Naive thymus-derived CD8-positive, alpha-beta T cell (primary cell): ENCODE measurements at regions of chr16 and their contacts with region 1.

Region 1: GRCh38 chr16:30941600-30942425 is 7.1 kb upstream of the ORAI3 start:
- DNase-seq: peak in 9 of 10 donors; percentile 36 to 67 (median 52)
- ATAC-seq: peak; percentile 93 to 98
- H3K4me3 Mint-ChIP-seq: peak overlapping the region in 2 of 10 donors; percentile 12 to 55
- H3K27ac Mint-ChIP-seq: peak overlapping the region in 4 of 10 donors; percentile 34 to 62 (median 48)
- H3K4me1 Mint-ChIP-seq: peaks cover 14 to 21% (median 19%) of the 10 kb centered on the region in 4 donors
- H3K27me3 Mint-ChIP-seq: no peaks in the 10 kb centered on the region

Region 2: GRCh38 chr16:30698139-30698815 is 243.5 kb before region 1 on chr16:
- POLR2A ChIA-PET with region 1: no interaction called
- DNase-seq: peak; percentile 98 to 100 (median 100)
- ATAC-seq: peak; percentile 75 to 77
- H3K4me3 Mint-ChIP-seq: peak overlapping the region; percentile 93 to 98 (median 96)
- H3K27ac Mint-ChIP-seq: peak overlapping the region; percentile 99 to 100 (median 100)
- H3K4me1 Mint-ChIP-seq: peaks cover 14 to 43% (median 40%) of the 10 kb centered on the region in 4 donors
- H3K27me3 Mint-ChIP-seq: no peaks in the 10 kb centered on the region

Region 3: DNA sequence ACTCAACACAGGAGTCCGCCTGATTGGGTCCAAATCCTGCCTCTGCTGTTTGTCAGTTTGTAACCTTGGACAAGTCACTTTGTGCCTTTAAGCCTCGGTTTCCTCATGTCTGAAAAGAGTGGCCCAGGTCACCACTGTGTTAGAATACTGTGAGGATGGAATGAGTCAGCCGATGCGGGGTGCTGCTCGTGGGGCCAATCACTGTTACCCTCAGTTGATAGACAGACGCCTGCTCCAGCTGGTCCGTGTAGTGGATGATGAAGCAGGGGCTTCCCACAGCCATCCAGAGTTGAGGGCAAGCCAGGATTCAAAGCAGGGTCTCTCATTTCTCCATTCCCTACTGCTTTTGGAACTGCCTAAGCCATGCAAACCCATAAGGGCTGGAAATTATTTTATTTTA is 12.6 kb before region 1 on chr16:
- POLR2A ChIA-PET with region 1: interaction called, 10 read pairs
- DNase-seq: no peak
- ATAC-seq: no peak
- H3K4me3 Mint-ChIP-seq: no peak overlapping the region
- H3K27ac Mint-ChIP-seq: peak overlapping the region in 1 of 10 donors; percentile 79
- H3K4me1 Mint-ChIP-seq: peaks cover 14 to 30% (median 20%) of the 10 kb centered on the region in 4 donors
- H3K27me3 Mint-ChIP-seq: no peaks in the 10 kb centered on the region

Region 4: GRCh38 chr16:30957456-30958174 is 15.8 kb after region 1 on chr16 and contains the start of gene SETD1A:
- POLR2A ChIA-PET with region 1: interaction called, 10 read pairs
- DNase-seq: peak; percentile 91 to 99 (median 98)
- ATAC-seq: peak; percentile 85 to 89
- H3K4me3 Mint-ChIP-seq: peak within 1 kb of the TSS; percentile 89 to 99 (median 95)
- H3K27ac Mint-ChIP-seq: peak within 1 kb of the TSS; percentile 97 to 99 (median 98)
- H3K4me1 Mint-ChIP-seq: peaks cover 21 to 40% (median 36%) of the 10 kb centered on the region in 4 donors
- H3K27me3 Mint-ChIP-seq: peaks cover 0 to 2% (median 0%) of the 10 kb centered on the region in 5 donors
- polyA plus RNA-seq, gene SETD1A: 0.35 to 2.0 (median 0.77) TPM